ENCODE measurements at regions of chr1 and their contacts with region 1.

Region 1: DNA sequence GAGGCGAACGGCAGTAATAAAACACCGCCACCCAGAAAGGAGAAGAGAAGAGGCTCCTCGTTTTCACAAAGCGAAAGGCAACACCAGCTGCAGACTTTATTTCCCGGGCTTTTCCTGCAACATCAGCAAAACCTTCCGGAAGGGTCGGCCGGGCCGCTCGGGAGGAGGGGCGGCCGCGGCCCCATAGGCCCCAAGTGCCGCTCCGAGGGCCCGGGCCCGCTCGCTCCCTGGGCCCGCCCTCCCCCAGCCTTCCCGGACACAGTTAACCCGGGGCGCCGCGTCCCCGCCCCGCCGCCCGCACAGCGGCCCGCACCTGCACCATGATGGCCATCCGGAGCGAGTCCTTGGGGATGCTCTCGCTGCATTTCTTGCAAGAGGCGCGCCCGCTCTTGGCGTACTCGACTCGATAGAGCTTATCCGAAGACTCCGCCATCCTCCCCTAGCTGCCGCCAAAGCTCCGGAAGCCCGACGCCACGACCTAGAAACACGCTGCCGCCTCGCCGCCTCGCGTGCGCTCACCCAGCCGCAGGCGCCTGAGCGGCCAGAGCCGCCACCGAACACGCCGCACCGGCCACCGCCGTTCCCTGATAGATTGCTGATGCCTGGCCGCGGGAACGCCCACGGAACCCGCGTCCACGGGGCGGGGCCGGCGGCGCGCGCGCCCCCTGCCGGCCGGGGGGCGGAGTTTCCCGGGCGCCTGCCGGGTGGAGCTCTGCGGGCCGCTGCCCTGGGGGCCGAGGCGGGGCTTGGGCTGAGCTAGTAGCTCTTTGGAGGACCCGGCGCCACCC is at the start of gene PARP1:
- DNase-seq: peak; percentile 90
- ATAC-seq: peak; percentile 90
- H3K4me3 Mint-ChIP-seq: peak within 1 kb of the TSS; percentile 98
- H3K27ac Mint-ChIP-seq: peak within 1 kb of the TSS; percentile 97
- H3K4me1 Mint-ChIP-seq: peaks cover 41% of the 10 kb centered on the region
- H3K27me3 Mint-ChIP-seq: peaks cover 3% of the 10 kb centered on the region
- total RNA-seq, gene PARP1: 139 to 145 TPM

Region 2: GRCh38 chr1:226274138-226274537 is 133.6 kb before region 1 on chr1:
- CTCF ChIA-PET with region 1: no interaction called
- POLR2A ChIA-PET with region 1: no interaction called
- DNase-seq: no peak
- ATAC-seq: no peak
- H3K4me3 Mint-ChIP-seq: no peak overlapping the region
- H3K27ac Mint-ChIP-seq: no peak overlapping the region
- H3K4me1 Mint-ChIP-seq: no peaks in the 10 kb centered on the region
- H3K27me3 Mint-ChIP-seq: no peaks in the 10 kb centered on the region

Region 3: GRCh38 chr1:226308723-226309315 is 98.9 kb before region 1 on chr1 and contains the start of gene LIN9:
- CTCF ChIA-PET with region 1: interaction called, 5 read pairs
- POLR2A ChIA-PET with region 1: interaction called, 12 read pairs
- DNase-seq: peak; percentile 95
- ATAC-seq: peak; percentile 91
- H3K4me3 Mint-ChIP-seq: peak within 1 kb of the TSS; percentile 90
- H3K27ac Mint-ChIP-seq: peak within 1 kb of the TSS; percentile 92
- H3K4me1 Mint-ChIP-seq: peaks cover 28% of the 10 kb centered on the region
- H3K27me3 Mint-ChIP-seq: peaks cover 14% of the 10 kb centered on the region
- total RNA-seq, gene LIN9: 13.3 to 14.9 TPM

Region 4: DNA sequence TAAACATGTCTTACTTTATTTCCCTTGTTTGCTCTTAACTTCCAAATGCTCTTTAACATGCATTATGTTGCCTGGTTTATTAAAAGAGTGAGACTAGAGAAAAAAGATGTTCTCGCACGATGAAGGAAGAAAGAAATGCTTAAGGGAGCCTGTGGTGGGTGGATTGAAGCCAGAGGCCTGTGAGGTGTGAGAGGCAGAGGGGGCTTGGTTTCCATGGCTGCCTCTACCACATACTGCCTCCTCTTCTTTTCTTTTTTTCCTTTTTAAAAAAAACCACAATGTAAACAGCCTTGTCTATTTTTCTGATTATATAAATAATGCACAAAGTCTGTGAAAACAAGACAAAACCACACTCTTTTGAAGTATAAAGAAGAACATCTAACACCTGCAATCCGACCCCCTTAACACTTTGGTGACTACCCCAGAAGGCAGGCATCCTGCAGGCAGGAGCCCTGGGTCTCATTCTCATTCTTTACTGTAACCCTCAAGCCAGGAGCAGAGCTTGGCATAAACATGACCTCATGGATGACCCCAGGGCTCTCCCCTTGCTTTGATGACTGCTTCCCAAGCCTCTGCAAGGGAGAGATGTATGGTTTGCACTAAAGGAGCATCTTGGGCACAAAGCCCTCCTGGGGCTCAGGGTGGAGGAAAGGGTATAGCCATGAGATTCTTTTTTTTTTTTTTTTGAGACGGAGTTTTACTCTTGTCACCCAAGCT is 10.3 kb after region 1 on chr1:
- CTCF ChIA-PET with region 1: interaction called, 29 read pairs
- POLR2A ChIA-PET with region 1: no interaction called
- DNase-seq: no peak
- ATAC-seq: no peak
- H3K4me3 Mint-ChIP-seq: no peak overlapping the region
- H3K27ac Mint-ChIP-seq: no peak overlapping the region
- H3K4me1 Mint-ChIP-seq: peaks cover 9% of the 10 kb centered on the region
- H3K27me3 Mint-ChIP-seq: peaks cover 14% of the 10 kb centered on the region

Region 5: GRCh38 chr1:226438007-226438406 is 30.3 kb after region 1 on chr1:
- CTCF ChIA-PET with region 1: interaction called, 10 read pairs
- POLR2A ChIA-PET with region 1: no interaction called
- DNase-seq: no peak
- ATAC-seq: no peak
- H3K4me3 Mint-ChIP-seq: no peak overlapping the region
- H3K27ac Mint-ChIP-seq: no peak overlapping the region
- H3K4me1 Mint-ChIP-seq: peaks cover under 1% of the 10 kb centered on the region
- H3K27me3 Mint-ChIP-seq: peaks cover 40% of the 10 kb centered on the region

Region 6: DNA sequence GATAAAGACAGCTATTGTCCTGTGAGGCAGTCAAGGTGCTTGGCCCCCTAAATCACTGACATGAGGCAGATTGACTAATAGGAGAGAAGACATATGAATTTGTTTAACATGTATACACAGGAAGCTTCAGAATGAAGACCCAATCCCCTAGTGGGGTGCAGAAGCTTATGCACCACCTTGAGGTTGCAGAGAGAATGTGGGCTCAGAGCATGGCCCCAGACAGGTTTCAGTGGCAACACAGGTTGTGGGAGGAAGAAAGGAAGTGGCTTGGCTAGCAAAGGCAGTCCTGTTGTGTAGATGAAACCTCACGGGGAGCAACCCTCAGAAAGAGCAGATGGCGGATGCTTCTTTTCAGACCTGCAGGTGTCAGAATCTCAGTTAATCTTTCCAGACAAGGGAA is 37.2 kb after region 1 on chr1:
- CTCF ChIA-PET with region 1: interaction called, 26 read pairs
- POLR2A ChIA-PET with region 1: no interaction called
- DNase-seq: peak; percentile 90
- ATAC-seq: peak; percentile 100
- H3K4me3 Mint-ChIP-seq: peak overlapping the region; percentile 2
- H3K27ac Mint-ChIP-seq: peak overlapping the region; percentile 50
- H3K4me1 Mint-ChIP-seq: peaks cover 32% of the 10 kb centered on the region
- H3K27me3 Mint-ChIP-seq: peaks cover 45% of the 10 kb centered on the region

Region 7: DNA sequence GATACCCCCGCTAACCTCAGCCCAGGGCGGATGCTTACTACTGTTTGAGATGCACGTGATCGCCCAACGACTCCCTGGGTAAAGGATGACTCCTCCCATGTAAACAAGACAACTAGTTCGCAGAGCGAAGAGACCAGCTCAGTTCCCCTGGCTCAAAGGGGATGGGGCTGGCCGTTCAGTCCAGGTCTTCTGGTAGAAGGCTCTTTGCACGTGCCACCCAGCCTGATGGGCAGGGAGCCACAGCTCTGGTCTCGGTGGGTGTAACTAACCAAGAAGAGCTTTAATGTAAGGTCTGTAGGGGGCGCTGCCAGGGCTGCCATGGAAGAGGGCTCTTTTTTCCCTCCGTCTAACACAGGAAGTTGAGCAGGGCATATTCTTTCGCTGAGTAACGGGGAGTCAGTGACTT is 49.6 kb after region 1 on chr1:
- CTCF ChIA-PET with region 1: interaction called, 14 read pairs
- POLR2A ChIA-PET with region 1: interaction called, 7 read pairs
- DNase-seq: peak; percentile 61
- ATAC-seq: peak; percentile 86
- H3K4me3 Mint-ChIP-seq: peak overlapping the region; percentile 68
- H3K27ac Mint-ChIP-seq: peak overlapping the region; percentile 77
- H3K4me1 Mint-ChIP-seq: peaks cover 15% of the 10 kb centered on the region
- H3K27me3 Mint-ChIP-seq: peaks cover 25% of the 10 kb centered on the region